H1 (cell line): ENCODE measurements at regions of chr11 and their contacts with region 1.

Region 1: DNA sequence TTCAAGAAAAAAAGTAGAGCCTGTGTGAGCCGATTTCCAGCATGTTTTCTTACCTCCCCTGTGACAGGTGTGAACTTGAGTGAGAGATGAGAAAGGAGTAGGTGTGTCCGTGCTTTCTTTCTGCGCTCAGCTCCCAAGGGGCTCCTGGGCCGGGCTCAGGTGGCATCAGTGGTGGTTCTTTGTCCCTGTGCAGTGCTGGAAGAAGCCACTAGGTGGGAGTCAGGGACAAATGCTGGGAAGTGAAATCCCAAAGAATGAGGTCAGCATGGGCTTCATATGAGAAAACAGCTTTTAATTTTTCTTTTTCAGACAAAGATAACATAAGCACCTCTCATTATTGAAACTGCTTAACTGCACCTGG is 57.8 kb downstream of the PPFIBP2 start:
- DNase-seq: peak; percentile 43 to 88
- H3K4me3 ChIP-seq: no peak overlapping the region
- H3K27ac ChIP-seq: no peak overlapping the region
- H3K4me1 ChIP-seq: peaks cover 11 to 32% (median 24%) of the 10 kb centered on the region in 4 experiments
- H3K27me3 ChIP-seq: no peaks in the 10 kb centered on the region
- CTCF ChIP-seq: peak; percentile 68 to 90 (median 89)
- EP300 ChIP-seq: no peak
- POLR2A ChIP-seq: no peak
- RAD21 ChIP-seq: peak; percentile 91

Region 2: GRCh38 chr11:7548659-7549274 is 22.9 kb before region 1 on chr11:
- CTCF ChIA-PET with region 1: interaction called, 54 read pairs
- POLR2A ChIA-PET with region 1: no interaction called
- DNase-seq: peak; percentile 62 to 73
- H3K4me3 ChIP-seq: no peak overlapping the region
- H3K27ac ChIP-seq: no peak overlapping the region
- H3K4me1 ChIP-seq: peaks cover 0 to 7% (median 4%) of the 10 kb centered on the region in 4 experiments; a peak in 4 of 7 replicates
- H3K27me3 ChIP-seq: no peaks in the 10 kb centered on the region
- CTCF ChIP-seq: peak; percentile 94 to 95 (median 94)
- EP300 ChIP-seq: no peak
- POLR2A ChIP-seq: no peak
- RAD21 ChIP-seq: peak; percentile 79 to 83

Region 3: GRCh38 chr11:7592711-7593110 is 21.1 kb after region 1 on chr11:
- CTCF ChIA-PET with region 1: interaction called, 82 read pairs
- POLR2A ChIA-PET with region 1: interaction called, 5 read pairs
- DNase-seq: no peak
- H3K4me3 ChIP-seq: no peak overlapping the region
- H3K27ac ChIP-seq: no peak overlapping the region
- H3K4me1 ChIP-seq: peaks cover 0 to 9% (median 7%) of the 10 kb centered on the region in 4 experiments; a peak in 4 of 7 replicates
- H3K27me3 ChIP-seq: no peaks in the 10 kb centered on the region
- CTCF ChIP-seq: no peak
- EP300 ChIP-seq: no peak
- POLR2A ChIP-seq: no peak
- RAD21 ChIP-seq: no peak

Region 4: GRCh38 chr11:7621090-7621489 is 49.5 kb after region 1 on chr11:
- CTCF ChIA-PET with region 1: interaction called, 13 read pairs
- POLR2A ChIA-PET with region 1: no interaction called
- DNase-seq: no peak
- H3K4me3 ChIP-seq: no peak overlapping the region
- H3K27ac ChIP-seq: no peak overlapping the region
- H3K4me1 ChIP-seq: peaks cover 0 to 9% (median 5%) of the 10 kb centered on the region in 4 experiments; a peak in 4 of 7 replicates
- H3K27me3 ChIP-seq: no peaks in the 10 kb centered on the region
- CTCF ChIP-seq: no peak
- EP300 ChIP-seq: no peak
- POLR2A ChIP-seq: no peak
- RAD21 ChIP-seq: no peak

Region 5: GRCh38 chr11:7637447-7638157 is 66.0 kb after region 1 on chr11:
- CTCF ChIA-PET with region 1: interaction called, 325 read pairs
- POLR2A ChIA-PET with region 1: no interaction called
- DNase-seq: no peak
- H3K4me3 ChIP-seq: no peak overlapping the region
- H3K27ac ChIP-seq: no peak overlapping the region
- H3K4me1 ChIP-seq: no peaks in the 10 kb centered on the region
- H3K27me3 ChIP-seq: no peaks in the 10 kb centered on the region
- CTCF ChIP-seq: no peak
- EP300 ChIP-seq: no peak
- POLR2A ChIP-seq: no peak
- RAD21 ChIP-seq: no peak

Region 6: DNA sequence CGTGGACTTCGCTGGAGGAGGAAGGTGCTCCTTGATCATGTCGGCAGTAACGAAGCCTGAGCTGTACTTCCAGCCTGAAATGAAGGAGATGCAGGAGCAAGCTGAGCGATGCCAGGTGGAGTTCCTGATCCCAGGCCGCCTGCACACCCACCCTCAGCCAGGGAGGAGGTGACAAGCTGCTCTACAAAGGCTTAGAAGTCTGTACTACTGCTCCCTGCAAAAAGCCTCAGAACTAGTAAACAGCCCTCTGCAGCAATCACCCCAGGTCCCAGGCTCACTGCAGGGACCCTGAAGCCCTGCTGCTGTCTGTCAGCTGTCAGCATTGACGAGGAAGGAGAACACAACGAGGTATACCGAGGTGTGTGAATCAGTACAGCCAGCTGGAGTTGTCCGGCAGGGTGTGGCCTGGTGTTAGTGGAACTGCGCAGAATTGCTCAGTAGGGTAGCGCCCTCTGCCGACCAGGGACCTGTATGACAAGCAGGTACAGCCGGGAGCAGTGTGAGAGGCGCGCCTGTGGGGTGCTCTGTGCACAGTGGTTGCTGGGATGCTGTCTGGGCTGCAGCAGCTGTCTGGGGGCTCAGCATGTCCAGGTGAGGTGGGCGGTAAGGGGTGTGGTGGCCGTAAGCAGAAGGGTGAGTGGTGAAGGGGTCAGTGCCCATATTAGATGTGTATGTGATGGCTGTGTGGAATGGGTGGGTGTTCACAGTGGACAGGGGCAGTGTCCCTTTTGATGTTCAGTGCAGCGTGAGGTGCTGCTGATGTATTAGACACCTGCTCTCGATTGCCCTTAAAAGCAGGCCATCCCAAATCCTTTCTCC is 94.1 kb after region 1 on chr11:
- CTCF ChIA-PET with region 1: interaction called, 38 read pairs
- POLR2A ChIA-PET with region 1: interaction called, 5 read pairs
- DNase-seq: peak in 1 of 2 experiments; percentile 90
- H3K4me3 ChIP-seq: no peak overlapping the region
- H3K27ac ChIP-seq: no peak overlapping the region
- H3K4me1 ChIP-seq: no peaks in the 10 kb centered on the region
- H3K27me3 ChIP-seq: no peaks in the 10 kb centered on the region
- CTCF ChIP-seq: peak; percentile 80 to 92 (median 87)
- EP300 ChIP-seq: no peak
- POLR2A ChIP-seq: no peak
- RAD21 ChIP-seq: peak; percentile 84 to 88

Region 7: GRCh38 chr11:7688238-7688826 is 116.7 kb after region 1 on chr11:
- CTCF ChIA-PET with region 1: interaction called, 11 read pairs
- POLR2A ChIA-PET with region 1: no interaction called
- DNase-seq: no peak
- H3K4me3 ChIP-seq: no peak overlapping the region
- H3K27ac ChIP-seq: no peak overlapping the region
- H3K4me1 ChIP-seq: peaks cover 0 to 4% (median under 1%) of the 10 kb centered on the region in 4 experiments; a peak in 2 of 7 replicates
- H3K27me3 ChIP-seq: no peaks in the 10 kb centered on the region
- CTCF ChIP-seq: peak; percentile 26 to 63 (median 60)
- EP300 ChIP-seq: no peak
- POLR2A ChIP-seq: no peak
- RAD21 ChIP-seq: peak; percentile 61 to 67